Cardiac septum (tissue), 1 donor: ENCODE measurements at regions of chr7 and their contacts with region 1.

Region 1: GRCh38 chr7:75650681-75651080 is 88.1 kb downstream of the HIP1 start:
- DNase-seq: peak; percentile 84

Region 2: GRCh38 chr7:75611548-75612178 is 39.0 kb before region 1 on chr7:
- intact Hi-C with region 1: loop called (anchors 5 kb)
- DNase-seq: peak; percentile 92

Region 3: DNA sequence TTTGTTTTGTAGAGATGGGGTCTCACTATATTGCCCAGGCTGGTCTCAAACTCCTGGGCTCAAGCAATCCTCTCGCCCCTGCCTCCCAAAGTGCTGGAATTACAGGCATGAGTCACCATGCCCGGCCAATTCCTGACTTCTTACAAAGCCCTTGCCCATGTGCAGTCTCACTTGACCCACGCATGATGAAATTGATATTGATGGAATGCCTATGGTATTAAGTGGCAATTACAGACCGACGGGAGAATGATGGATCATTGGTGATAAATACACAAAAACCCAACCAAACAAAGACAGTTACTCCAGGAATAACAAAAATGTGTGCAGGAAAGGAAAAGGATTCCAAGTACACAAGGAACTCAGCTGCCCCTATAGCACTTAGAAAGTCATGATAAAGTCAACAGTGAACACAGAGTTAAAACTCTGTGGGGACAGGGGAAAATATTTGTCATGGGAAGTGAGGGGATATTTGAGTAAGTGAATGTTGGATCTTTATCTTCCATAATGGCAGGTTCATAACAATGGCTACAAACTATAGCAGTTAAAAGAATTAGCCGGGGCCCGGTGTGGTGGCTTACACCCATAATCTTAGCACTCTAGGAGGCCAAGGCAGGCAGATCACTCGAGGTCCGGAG is 66.4 kb after region 1 on chr7:
- intact Hi-C with region 1: no loop called
- DNase-seq: no peak